ENCODE measurements at regions of chr5 and their contacts with region 1.

Region 1: GRCh38 chr5:155587458-155587857 is 573.9 kb downstream of the KIF4B start:
- DNase-seq: no peak
- H3K4me3 ChIP-seq: no peak overlapping the region
- H3K27ac ChIP-seq: no peak overlapping the region
- H3K4me1 ChIP-seq: no peaks in the 10 kb centered on the region
- H3K27me3 ChIP-seq: no peaks in the 10 kb centered on the region
- CTCF ChIP-seq: no peak
- EP300 ChIP-seq: no peak
- POLR2A ChIP-seq: no peak

Region 2: DNA sequence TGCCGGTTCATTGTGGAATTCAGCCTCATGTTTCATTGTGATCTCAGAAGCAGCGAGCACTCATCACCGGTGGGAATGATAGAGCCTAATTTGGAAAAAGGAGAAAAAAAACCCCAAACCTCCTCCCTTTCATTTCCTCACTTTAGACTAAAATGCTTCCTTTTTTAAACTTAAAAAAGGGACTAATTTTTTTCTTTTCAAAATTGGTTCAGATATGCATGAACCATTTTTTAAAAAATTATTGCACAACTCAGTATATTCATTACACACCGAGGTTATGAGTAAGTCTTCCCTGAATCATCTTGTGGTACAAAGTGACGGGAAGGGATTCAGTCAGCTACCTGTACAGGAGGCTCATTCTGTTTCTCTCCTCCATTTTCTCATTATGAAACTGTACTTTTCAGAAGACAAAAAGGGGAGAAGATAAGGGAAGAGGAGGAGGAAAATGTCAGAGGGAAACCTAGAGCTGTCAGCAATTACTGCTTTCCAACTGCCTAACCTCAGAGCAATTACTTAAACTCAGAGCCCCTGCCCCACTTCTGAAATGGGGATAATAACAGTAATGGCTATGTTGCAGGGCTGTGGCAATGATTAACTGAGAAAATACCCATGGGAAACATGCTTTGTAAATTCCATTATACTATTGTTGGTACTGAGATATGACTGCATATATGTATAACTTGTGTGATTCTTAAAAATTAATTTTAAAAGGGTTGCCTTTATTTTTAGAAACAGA is 1372.9 kb before region 1 on chr5:
- in situ Hi-C with region 1: no loop called
- intact Hi-C with region 1: loop called (anchors 10 kb)
- DNase-seq: no peak
- H3K4me3 ChIP-seq: no peak overlapping the region
- H3K27ac ChIP-seq: peak overlapping the region in 2 of 4 donors; percentile 33 to 39
- H3K4me1 ChIP-seq: peaks cover 0 to 13% (median 0%) of the 10 kb centered on the region in 4 donors
- H3K27me3 ChIP-seq: no peaks in the 10 kb centered on the region
- CTCF ChIP-seq: no peak
- EP300 ChIP-seq: no peak
- POLR2A ChIP-seq: no peak

Region 3: DNA sequence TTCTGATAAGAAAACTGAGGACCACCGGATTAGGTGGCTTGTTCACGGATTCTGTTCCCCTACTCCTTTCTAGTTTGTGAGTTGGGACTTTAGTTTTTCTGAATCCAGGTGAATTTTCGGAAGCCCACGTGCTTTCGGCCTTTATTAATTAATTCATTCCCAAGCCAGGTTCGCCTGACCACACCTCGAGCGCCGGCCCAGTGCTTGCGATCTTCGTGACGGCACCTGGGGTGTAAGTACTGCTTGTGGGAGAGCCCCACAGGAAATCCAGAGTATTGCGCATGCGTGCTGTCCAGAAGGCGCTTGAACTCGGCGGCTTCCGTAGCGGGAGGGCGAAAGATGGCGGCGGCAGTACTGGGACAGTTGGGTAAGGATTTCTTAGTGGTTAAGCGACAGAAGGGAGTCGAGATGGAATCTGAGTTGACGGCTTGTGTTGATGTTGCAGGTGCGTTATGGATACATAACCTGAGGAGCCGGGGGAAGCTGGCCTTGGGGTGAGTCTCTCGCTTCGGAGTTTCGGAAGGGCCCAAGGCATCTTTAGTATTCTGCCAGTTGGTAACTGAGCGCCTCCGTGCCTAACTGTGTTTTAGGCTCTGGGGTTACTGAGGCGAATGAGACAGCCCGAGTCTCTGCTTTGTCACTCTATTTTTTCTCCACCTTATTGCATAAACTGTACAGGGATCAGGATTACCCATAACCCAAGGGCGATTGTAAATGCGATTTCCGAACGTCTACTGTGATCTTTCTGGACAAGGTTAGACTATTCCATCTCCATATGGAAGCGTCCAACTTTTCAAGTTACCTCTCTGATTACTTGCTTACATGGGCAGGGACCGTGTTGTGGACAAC is 646.5 kb before region 1 on chr5 and contains the start of gene MRPL22:
- in situ Hi-C with region 1: no loop called
- intact Hi-C with region 1: no loop called
- DNase-seq: peak; percentile 95
- H3K4me3 ChIP-seq: peak within 1 kb of the TSS; percentile 58 to 69 (median 64)
- H3K27ac ChIP-seq: peak within 1 kb of the TSS; percentile 73 to 88 (median 84)
- H3K4me1 ChIP-seq: peaks cover 6 to 48% (median 28%) of the 10 kb centered on the region in 4 donors
- H3K27me3 ChIP-seq: no peaks in the 10 kb centered on the region
- CTCF ChIP-seq: peak in 4 of 5 experiments; percentile 8 to 57 (median 36)
- EP300 ChIP-seq: no peak
- POLR2A ChIP-seq: peak; percentile 78
- total RNA-seq, gene MRPL22: 9.4 to 13.2 (median 12.5) TPM in 3 of 4 donors, not detected in the other